B cell (primary cell): ENCODE measurements at regions of chr3 and their contacts with region 1.

Region 1: DNA sequence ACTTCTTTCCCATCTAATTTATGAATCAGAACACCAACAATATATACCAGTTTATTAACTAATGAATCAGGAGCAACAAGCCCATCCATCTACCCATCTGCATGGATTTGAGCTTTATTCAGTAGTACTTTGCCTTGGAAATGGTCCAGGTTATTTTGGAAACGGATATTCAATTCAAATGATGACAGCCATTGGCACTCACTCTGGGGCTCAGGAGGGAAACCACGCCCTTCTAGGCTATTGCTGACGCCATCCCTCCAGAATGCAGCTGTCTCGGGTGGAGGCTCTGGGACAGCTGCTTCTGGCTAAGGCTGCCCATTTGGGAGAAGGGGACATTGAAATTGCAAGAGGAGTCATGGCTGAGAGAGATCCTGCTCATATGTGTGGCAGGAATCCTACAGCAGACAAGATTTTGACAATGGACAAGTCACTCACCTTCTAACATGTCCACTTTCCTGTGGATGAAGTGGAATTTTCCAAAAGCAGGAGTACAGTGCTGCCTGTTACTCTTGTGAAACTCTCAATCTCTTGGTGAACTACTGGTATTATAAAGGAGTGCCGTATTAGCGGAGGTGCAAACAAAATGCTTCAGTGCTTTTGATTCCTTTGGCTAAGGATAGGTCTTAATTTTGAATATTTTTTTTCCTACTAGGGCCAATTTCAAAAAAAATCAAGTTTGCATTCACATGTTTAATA is 29.3 kb upstream of the TRAK1 start:
- DNase-seq: no peak
- ATAC-seq: no peak
- H3K4me3 ChIP-seq: no peak overlapping the region
- H3K4me3 Mint-ChIP-seq: peak overlapping the region; percentile 59
- H3K27ac ChIP-seq: peak overlapping the region; percentile 51 to 100
- H3K27ac Mint-ChIP-seq: peak overlapping the region; percentile 77
- H3K4me1 ChIP-seq: peaks cover 92 to 95% of the 10 kb centered on the region in 2 donors
- H3K4me1 Mint-ChIP-seq: peaks cover 85% of the 10 kb centered on the region
- H3K27me3 ChIP-seq: no peaks in the 10 kb centered on the region
- H3K27me3 Mint-ChIP-seq: no peaks in the 10 kb centered on the region
- CTCF ChIP-seq: no peak

Region 2: GRCh38 chr3:42036483-42036823 is 25.4 kb before region 1 on chr3:
- CTCF ChIA-PET with region 1: no interaction called
- POLR2A ChIA-PET with region 1: interaction called, 5 read pairs
- intact Hi-C with region 1: loop called (anchors 2 kb)
- DNase-seq: no peak
- ATAC-seq: peak; percentile 37
- H3K4me3 ChIP-seq: no peak overlapping the region
- H3K4me3 Mint-ChIP-seq: peak overlapping the region; percentile 73
- H3K27ac ChIP-seq: peak overlapping the region; percentile 0 to 49
- H3K27ac Mint-ChIP-seq: peak overlapping the region; percentile 94
- H3K4me1 ChIP-seq: peaks cover 58 to 82% of the 10 kb centered on the region in 2 donors
- H3K4me1 Mint-ChIP-seq: peaks cover 82% of the 10 kb centered on the region
- H3K27me3 ChIP-seq: no peaks in the 10 kb centered on the region
- H3K27me3 Mint-ChIP-seq: no peaks in the 10 kb centered on the region
- CTCF ChIP-seq: no peak

Region 3: DNA sequence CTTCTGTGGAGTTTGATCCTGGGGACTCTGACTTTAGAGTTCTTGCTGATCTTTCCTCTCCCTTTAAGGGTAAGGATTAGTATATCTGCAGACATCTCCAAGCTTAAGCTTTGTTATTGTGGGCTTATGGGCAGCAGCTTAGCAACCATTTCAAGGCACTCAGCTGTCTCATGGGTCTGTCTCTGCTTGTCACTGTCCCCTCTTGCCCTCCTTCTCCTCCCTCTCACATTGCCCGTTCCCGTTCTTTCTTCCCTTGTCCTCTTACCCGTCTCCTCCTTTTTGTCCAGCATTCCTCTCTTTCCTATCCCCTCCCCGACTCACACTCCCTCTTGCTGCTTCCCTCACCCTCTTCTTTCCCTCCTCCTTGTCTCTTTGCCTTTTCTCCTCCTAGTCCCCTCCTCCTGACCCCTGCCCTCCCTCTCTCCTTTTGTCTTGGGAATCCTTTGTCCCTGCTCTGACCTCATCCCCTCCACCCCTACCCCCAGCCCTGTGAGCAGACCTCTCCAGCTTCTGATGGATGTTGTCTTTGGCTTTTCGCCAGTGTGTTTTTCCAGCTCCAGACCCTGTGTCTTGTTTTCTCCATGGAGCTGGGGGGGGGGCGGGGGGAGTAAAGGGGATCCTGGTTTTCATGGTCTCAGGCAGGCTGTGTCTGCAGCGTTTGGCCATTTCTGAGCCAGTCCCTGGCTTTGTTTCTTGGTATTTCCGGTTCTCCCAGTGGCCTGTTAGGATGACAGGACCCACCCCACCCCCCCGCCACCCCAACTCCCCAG is 18.6 kb before region 1 on chr3:
- CTCF ChIA-PET with region 1: interaction called, 4 read pairs
- POLR2A ChIA-PET with region 1: interaction called, 5 read pairs
- intact Hi-C with region 1: loop called (anchors 1 kb)
- DNase-seq: no peak
- ATAC-seq: no peak
- H3K4me3 ChIP-seq: no peak overlapping the region
- H3K4me3 Mint-ChIP-seq: peak overlapping the region; percentile 35
- H3K27ac ChIP-seq: peak overlapping the region in 1 of 2 donors; percentile 19
- H3K27ac Mint-ChIP-seq: peak overlapping the region; percentile 72
- H3K4me1 ChIP-seq: peaks cover 71 to 82% of the 10 kb centered on the region in 2 donors
- H3K4me1 Mint-ChIP-seq: peaks cover 74% of the 10 kb centered on the region
- H3K27me3 ChIP-seq: no peaks in the 10 kb centered on the region
- H3K27me3 Mint-ChIP-seq: no peaks in the 10 kb centered on the region
- CTCF ChIP-seq: no peak

Region 4: DNA sequence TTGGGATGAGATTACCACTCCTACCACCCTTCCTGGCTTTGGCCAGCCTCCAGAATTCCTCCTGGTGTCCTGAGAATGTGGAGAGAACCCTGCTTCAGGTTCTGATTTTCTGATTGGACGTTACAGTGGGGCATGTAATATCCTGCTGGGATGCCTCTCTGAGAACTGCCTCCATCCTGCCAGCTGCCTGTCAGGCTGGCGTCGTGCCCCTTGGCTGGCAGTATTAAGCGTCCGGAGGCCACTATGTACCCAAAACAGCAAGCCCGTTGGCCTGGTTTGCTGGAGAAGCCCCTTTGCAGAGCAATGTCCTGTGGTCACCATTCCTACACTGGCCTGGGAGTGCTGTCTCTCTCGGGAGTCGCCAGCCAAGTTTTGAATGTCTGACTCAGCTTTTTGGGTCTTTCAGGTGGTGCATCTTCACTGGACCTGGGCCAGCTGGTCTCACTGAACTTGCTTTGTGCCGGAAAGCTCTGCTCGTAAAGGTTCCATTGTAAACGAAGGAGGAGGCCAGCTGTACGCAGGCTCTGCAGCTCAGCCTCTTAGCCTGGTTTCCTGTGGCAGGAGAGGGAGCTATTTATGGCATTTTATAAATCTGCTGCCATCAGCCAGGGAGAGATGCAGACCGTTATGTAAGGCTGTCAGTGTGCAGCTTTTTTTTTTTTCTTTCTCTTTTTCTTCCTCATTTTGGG is 10.2 kb after region 1 on chr3:
- CTCF ChIA-PET with region 1: interaction called, 8 read pairs
- POLR2A ChIA-PET with region 1: interaction called, 7 read pairs
- intact Hi-C with region 1: loop called (anchors 1 kb)
- DNase-seq: peak; percentile 55
- ATAC-seq: peak; percentile 14
- H3K4me3 ChIP-seq: peak overlapping the region in 4 of 5 experiments; percentile 12 to 36 (median 30)
- H3K4me3 Mint-ChIP-seq: peak overlapping the region; percentile 78
- H3K27ac ChIP-seq: peak overlapping the region; percentile 51 to 80
- H3K27ac Mint-ChIP-seq: peak overlapping the region; percentile 82
- H3K4me1 ChIP-seq: peaks cover 66 to 79% of the 10 kb centered on the region in 2 donors
- H3K4me1 Mint-ChIP-seq: peaks cover 82% of the 10 kb centered on the region
- H3K27me3 ChIP-seq: no peaks in the 10 kb centered on the region
- H3K27me3 Mint-ChIP-seq: no peaks in the 10 kb centered on the region
- CTCF ChIP-seq: no peak

Region 5: GRCh38 chr3:42080452-42080891 is 18.6 kb after region 1 on chr3:
- CTCF ChIA-PET with region 1: interaction called, 13 read pairs
- POLR2A ChIA-PET with region 1: interaction called, 12 read pairs
- intact Hi-C with region 1: loop called (anchors 1 kb)
- DNase-seq: peak; percentile 56
- ATAC-seq: peak; percentile 93
- H3K4me3 ChIP-seq: peak overlapping the region in 1 of 5 experiments; percentile 7
- H3K4me3 Mint-ChIP-seq: peak overlapping the region; percentile 87
- H3K27ac ChIP-seq: peak overlapping the region; percentile 65 to 84
- H3K27ac Mint-ChIP-seq: peak overlapping the region; percentile 99
- H3K4me1 ChIP-seq: peaks cover 48 to 57% of the 10 kb centered on the region in 2 donors
- H3K4me1 Mint-ChIP-seq: peaks cover 77% of the 10 kb centered on the region
- H3K27me3 ChIP-seq: no peaks in the 10 kb centered on the region
- H3K27me3 Mint-ChIP-seq: no peaks in the 10 kb centered on the region
- CTCF ChIP-seq: no peak

Region 6: GRCh38 chr3:42214565-42215283 is 152.9 kb after region 1 on chr3:
- CTCF ChIA-PET with region 1: no interaction called
- POLR2A ChIA-PET with region 1: no interaction called
- intact Hi-C with region 1: no loop called
- DNase-seq: no peak
- ATAC-seq: no peak
- H3K4me3 ChIP-seq: no peak overlapping the region
- H3K4me3 Mint-ChIP-seq: peak overlapping the region; percentile 37
- H3K27ac ChIP-seq: peak overlapping the region in 1 of 2 donors; percentile 45
- H3K27ac Mint-ChIP-seq: peak overlapping the region; percentile 62
- H3K4me1 ChIP-seq: peaks cover 47 to 49% of the 10 kb centered on the region in 2 donors
- H3K4me1 Mint-ChIP-seq: peaks cover 61% of the 10 kb centered on the region
- H3K27me3 ChIP-seq: no peaks in the 10 kb centered on the region
- H3K27me3 Mint-ChIP-seq: no peaks in the 10 kb centered on the region
- CTCF ChIP-seq: no peak